ENCODE measurements at regions of chr13 and their contacts with region 1.

Region 1: GRCh38 chr13:30865123-30866049 is 40.7 kb upstream of the MEDAG start:
- DNase-seq: peak; percentile 72
- H3K4me3 ChIP-seq: no peak overlapping the region
- H3K27ac ChIP-seq: peak overlapping the region; percentile 63
- H3K4me1 ChIP-seq: no peaks in the 10 kb centered on the region
- H3K27me3 ChIP-seq: no peaks in the 10 kb centered on the region
- CTCF ChIP-seq: peak; percentile 90

Region 2: DNA sequence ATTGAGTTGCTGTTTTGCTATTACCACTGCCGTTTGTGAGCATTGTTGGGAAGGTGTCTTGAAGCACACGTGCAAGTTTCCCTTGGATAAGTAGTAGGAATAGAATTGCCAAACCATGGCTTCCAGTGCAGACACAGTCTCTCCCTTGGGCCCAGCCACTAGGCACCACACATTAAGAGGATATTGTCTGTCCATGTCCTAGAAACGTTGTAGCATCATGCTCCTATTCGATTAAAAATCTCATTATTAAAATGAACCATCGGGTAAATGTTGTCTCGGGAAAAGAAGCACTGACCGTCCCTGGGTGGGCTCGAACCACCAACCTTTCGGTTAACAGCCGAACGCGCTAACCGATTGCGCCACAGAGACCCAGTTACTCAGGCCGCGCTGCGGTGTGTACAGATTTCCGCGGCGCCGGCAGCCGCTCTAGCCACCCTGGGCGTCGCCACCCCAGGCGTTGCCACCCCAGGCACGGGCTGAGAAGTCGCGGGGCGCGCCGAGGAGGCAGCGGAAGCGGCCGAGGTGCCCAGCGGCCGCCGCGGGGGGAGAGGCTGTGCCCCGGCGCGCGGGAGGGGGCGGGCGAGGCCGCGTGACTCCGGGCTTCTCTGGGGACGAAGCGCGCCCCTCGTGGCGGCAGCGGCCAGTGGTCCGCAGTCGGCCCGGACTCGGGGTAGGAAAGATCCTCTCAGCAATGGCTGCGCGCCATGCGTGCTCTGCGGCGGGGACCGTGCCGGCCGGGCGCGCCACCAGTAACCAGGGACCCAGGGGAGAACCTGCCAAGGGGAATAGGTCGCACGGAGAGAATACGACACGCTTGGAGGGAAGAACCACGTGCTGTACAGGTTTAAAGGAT is 191.5 kb before region 1 on chr13:
- intact Hi-C with region 1: loop called (anchors 10 kb)
- DNase-seq: peak; percentile 88
- H3K4me3 ChIP-seq: peak overlapping the region; percentile 42
- H3K27ac ChIP-seq: peak overlapping the region; percentile 68
- H3K4me1 ChIP-seq: no peaks in the 10 kb centered on the region
- H3K27me3 ChIP-seq: no peaks in the 10 kb centered on the region
- CTCF ChIP-seq: peak; percentile 57

Measured in colonic mucosa (tissue), 4 donors.